Cardiac septum (tissue), 1 donor: ENCODE measurements at regions of chr14 and their contacts with region 1.

Region 1: GRCh38 chr14:49173765-49174373 is 412.3 kb downstream of the RPS29 start:
- DNase-seq: no peak

Region 2: DNA sequence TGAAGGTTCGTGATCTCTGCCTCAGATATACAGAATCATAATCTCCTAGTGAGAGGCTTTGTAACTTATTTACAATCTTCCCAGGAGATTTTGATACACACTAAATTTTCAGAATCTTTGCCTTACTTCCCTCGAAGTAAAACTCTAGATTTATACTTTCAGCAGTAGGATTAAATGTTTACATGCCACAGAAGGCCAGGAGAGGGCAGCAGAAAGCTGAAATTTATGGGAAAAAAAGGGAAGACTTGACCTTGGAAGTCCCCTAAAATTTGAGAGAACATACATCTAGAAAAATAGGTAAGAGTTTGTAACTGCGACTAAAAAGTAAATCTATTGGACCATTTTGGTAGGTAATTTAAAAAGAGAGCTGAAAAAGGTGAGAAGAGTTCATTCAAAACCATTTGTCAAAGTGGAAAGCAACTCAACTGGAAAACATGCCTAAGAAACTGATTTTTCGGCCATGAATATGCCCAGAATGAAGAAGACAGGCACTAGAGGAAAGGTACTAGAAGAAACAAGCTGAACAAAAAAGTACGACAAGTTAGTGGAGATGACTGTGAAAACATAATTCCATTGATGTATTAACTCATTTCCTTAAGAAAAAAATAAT is 1256.4 kb before region 1 on chr14:
- intact Hi-C with region 1: loop called (anchors 5 kb)
- DNase-seq: no peak

Region 3: GRCh38 chr14:48973151-48973550 is 200.7 kb before region 1 on chr14:
- intact Hi-C with region 1: no loop called
- DNase-seq: no peak